Cardiac septum (tissue), 1 donor: ENCODE measurements at regions of chr10 and their contacts with region 1.

Region 1: DNA sequence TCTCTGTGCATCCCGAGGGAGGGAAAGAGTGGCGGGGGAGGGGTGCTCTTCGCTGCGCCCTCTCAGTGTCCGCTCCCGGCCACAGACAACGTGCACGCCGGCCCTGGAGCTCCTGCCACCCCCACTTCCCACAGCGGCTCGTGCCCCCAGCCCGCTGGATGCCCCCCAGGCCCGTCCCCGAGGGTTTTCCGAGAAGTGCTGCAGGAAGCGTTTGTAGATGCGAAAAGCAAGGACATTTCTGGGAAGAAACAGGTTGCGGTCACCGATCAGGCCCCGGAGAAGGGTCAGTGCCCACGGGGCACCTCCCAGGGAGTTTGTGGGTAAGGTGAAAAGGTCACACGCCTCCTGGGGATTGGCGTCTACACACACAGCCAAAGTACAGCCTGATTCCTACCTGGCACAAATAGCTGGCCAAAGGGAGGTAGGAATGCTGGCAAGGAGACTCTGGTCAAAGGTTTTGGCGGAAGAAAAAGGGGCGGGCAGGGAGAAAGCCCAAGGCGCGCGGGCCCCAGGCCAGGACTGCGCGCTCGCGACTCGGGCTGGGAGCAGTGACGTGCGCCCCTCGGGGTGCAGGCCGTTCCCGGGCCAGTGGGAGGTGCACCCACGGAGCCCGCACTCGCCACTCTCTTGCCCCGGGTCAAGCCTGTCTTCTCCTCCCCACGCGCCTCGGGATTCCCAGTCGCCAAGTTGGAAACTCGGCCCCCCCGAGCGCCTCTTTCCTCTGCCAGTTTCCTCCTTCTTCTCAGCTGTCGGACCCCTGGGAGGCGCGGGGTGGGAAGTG is 1.5 kb upstream of the NRP1 start:
- DNase-seq: peak; percentile 82

Region 2: DNA sequence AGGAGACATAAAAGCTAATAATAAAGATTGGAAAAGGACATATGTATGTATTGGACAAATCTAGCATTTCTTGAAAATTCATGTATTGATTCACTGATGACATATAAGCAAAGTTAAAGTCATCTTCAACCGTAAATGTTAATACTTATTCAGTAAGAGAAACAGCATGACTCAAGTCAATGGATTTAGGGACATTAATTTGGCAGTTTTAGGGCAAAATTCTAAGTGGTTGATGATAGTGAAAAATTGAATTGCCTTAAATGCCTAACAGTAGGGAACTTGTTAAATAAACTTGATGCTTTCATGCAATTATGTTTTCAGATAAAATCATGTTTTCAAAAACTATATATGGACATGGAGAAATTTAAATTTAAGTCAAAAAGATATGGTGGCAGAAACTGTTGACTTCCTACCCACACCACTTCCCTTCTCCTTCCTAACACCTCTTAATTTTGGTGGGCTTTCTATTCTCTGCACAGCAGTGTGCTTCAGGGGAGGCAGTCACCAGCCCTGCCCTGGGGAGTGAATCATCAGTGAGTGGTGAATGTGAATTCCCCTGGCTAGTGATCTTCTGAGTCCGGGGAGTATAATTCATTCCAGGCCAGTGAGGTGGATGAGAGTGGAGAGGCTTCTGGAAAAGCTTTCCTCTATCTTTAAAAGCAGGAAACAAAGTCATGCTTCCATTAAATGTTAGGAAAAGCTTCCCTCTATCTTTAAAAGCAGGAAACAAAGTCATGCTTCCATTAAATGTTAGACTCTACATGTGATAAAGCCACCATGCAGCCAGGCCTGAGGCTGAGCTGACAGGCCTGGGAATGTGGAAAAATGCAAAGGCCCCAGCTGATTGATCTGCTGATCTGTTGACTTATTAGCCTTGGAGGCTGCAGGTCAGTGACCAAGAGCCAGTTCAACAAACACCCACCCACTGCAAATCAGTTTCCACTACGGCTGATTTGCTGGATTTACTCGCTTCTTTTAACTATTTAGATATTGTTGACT is 352.8 kb before region 1 on chr10:
- intact Hi-C with region 1: no loop called
- DNase-seq: no peak

Region 3: GRCh38 chr10:33460505-33461294 is 124.7 kb after region 1 on chr10:
- intact Hi-C with region 1: loop called (anchors 2 kb)
- DNase-seq: no peak